ENCODE measurements at regions of chr11 and their contacts with region 1.

Region 1: GRCh38 chr11:44727373-44728287 is 868 bp downstream of the TSPAN18 start:
- DNase-seq: peak; percentile 85 to 88
- ATAC-seq: peak; percentile 86 to 94 (median 91)
- H3K4me3 ChIP-seq: peak overlapping the region; percentile 72
- H3K27ac ChIP-seq: peak overlapping the region; percentile 46
- H3K4me1 ChIP-seq: no peaks in the 10 kb centered on the region
- H3K27me3 ChIP-seq: peaks cover 0 to 46% (median 2%) of the 10 kb centered on the region in 3 donors
- CTCF ChIP-seq: peak; percentile 95

Region 2: GRCh38 chr11:44680982-44681597 is 46.5 kb before region 1 on chr11:
- intact Hi-C with region 1: no loop called
- DNase-seq: no peak
- ATAC-seq: no peak
- H3K4me3 ChIP-seq: no peak overlapping the region
- H3K27ac ChIP-seq: no peak overlapping the region
- H3K4me1 ChIP-seq: no peaks in the 10 kb centered on the region
- H3K27me3 ChIP-seq: no peaks in the 10 kb centered on the region
- CTCF ChIP-seq: no peak

Region 3: GRCh38 chr11:44775366-44775984 is 47.8 kb after region 1 on chr11:
- intact Hi-C with region 1: loop called in 1 of 2 experiments (anchors 2 kb)
- DNase-seq: peak; percentile 48 to 67
- ATAC-seq: peak; percentile 60 to 79 (median 76)
- H3K4me3 ChIP-seq: no peak overlapping the region
- H3K27ac ChIP-seq: no peak overlapping the region
- H3K4me1 ChIP-seq: no peaks in the 10 kb centered on the region
- H3K27me3 ChIP-seq: peaks cover 0 to 5% (median 0%) of the 10 kb centered on the region in 3 donors
- CTCF ChIP-seq: peak; percentile 62

Region 4: GRCh38 chr11:44893846-44894617 is 166.4 kb after region 1 on chr11:
- intact Hi-C with region 1: loop called in 1 of 2 experiments (anchors 1 kb)
- DNase-seq: peak; percentile 65 to 69
- ATAC-seq: peak; percentile 67 to 87 (median 80)
- H3K4me3 ChIP-seq: no peak overlapping the region
- H3K27ac ChIP-seq: no peak overlapping the region
- H3K4me1 ChIP-seq: peaks cover 8% of the 10 kb centered on the region
- H3K27me3 ChIP-seq: peaks cover 0 to 35% (median 2%) of the 10 kb centered on the region in 3 donors
- CTCF ChIP-seq: peak; percentile 68

Region 5: GRCh38 chr11:44905131-44905866 is 177.7 kb after region 1 on chr11:
- intact Hi-C with region 1: loop called in 1 of 2 experiments (anchors 5 kb)
- DNase-seq: no peak
- ATAC-seq: no peak
- H3K4me3 ChIP-seq: no peak overlapping the region
- H3K27ac ChIP-seq: no peak overlapping the region
- H3K4me1 ChIP-seq: no peaks in the 10 kb centered on the region
- H3K27me3 ChIP-seq: peaks cover 0 to 3% (median 2%) of the 10 kb centered on the region in 3 donors
- CTCF ChIP-seq: no peak

Region 6: GRCh38 chr11:44911029-44911814 is 183.6 kb after region 1 on chr11:
- intact Hi-C with region 1: loop called (anchors 1 to 5 kb)
- DNase-seq: peak; percentile 73 to 82
- ATAC-seq: peak; percentile 81 to 92 (median 86)
- H3K4me3 ChIP-seq: no peak overlapping the region
- H3K27ac ChIP-seq: no peak overlapping the region
- H3K4me1 ChIP-seq: no peaks in the 10 kb centered on the region
- H3K27me3 ChIP-seq: peaks cover 0 to 3% (median 0%) of the 10 kb centered on the region in 3 donors
- CTCF ChIP-seq: peak; percentile 90

Measured in psoas muscle (tissue), 8 donors.